Left colon (tissue), 2 donors: ENCODE measurements at regions of chr7 and their contacts with region 1.

Region 1: GRCh38 chr7:140326116-140326928 is 72.0 kb downstream of the SLC37A3 start:
- DNase-seq: peak; percentile 71 to 79
- ATAC-seq: peak; percentile 81

Region 2: GRCh38 chr7:140170375-140170774 is 155.9 kb before region 1 on chr7:
- intact Hi-C with region 1: loop called in 1 of 2 experiments (anchors 5 kb)
- DNase-seq: no peak
- ATAC-seq: no peak